GM12878 (cell line): ENCODE measurements at regions of chr5 and their contacts with region 1.

Region 1: GRCh38 chr5:39074016-39074886 is at the start of gene RICTOR:
- DNase-seq: peak; percentile 66
- ATAC-seq: peak; percentile 84
- H3K4me3 ChIP-seq: peak within 1 kb of the TSS; percentile 74
- H3K27ac ChIP-seq: peak within 1 kb of the TSS; percentile 97
- H3K4me1 ChIP-seq: peaks cover 4% of the 10 kb centered on the region; the same call in 1 of the 2 replicates
- H3K27me3 ChIP-seq: no peaks in the 10 kb centered on the region
- CTCF ChIP-seq: no peak
- EP300 ChIP-seq: no peak
- POLR2A ChIP-seq: peak; percentile 90
- RAD21 ChIP-seq: no peak
- polyA plus RNA-seq, gene RICTOR: 2.7 to 5.4 TPM

Region 2: DNA sequence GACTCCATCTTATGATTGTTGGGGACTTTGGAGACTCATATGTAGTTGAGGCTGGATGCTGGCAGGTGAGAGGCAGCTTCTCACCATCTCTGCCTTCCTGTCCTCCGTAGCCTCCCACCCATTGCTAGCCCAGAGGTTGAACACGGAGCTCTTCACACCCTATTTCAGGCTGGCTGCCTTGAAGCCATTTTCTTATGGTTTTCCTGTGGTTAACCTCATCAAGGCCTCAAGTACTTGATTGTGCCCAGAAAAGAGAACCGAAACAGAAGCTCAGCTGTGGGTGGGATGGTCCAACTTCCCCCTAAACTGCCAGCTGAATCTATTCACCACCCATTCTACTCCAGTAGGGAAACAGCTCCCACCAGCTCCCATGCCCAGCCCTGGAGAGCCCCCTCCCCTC is 620.7 kb before region 1 on chr5:
- CTCF ChIA-PET with region 1: no interaction called
- POLR2A ChIA-PET with region 1: no interaction called
- RAD21 ChIA-PET with region 1: no interaction called
- SMC1A ChIA-PET with region 1: no interaction called
- in situ Hi-C with region 1: loop called (anchors 25 kb)
- intact Hi-C with region 1: loop called (anchors 10 kb)
- DNase-seq: peak; percentile 89
- ATAC-seq: peak; percentile 98
- H3K4me3 ChIP-seq: no peak overlapping the region
- H3K27ac ChIP-seq: no peak overlapping the region
- H3K4me1 ChIP-seq: peaks cover 16% of the 10 kb centered on the region
- H3K27me3 ChIP-seq: peaks cover 0 to 21% of the 10 kb centered on the region in 2 experiments
- CTCF ChIP-seq: no peak
- EP300 ChIP-seq: peak; percentile 87 to 88
- POLR2A ChIP-seq: no peak
- RAD21 ChIP-seq: no peak

Region 3: GRCh38 chr5:39005566-39006232 is 68.6 kb before region 1 on chr5:
- CTCF ChIA-PET with region 1: interaction called, 110 read pairs
- POLR2A ChIA-PET with region 1: interaction called, 6 read pairs
- RAD21 ChIA-PET with region 1: interaction called, 32 read pairs
- SMC1A ChIA-PET with region 1: interaction called, 68 read pairs
- in situ Hi-C with region 1: no loop called
- intact Hi-C with region 1: no loop called
- DNase-seq: no peak
- ATAC-seq: peak; percentile 76
- H3K4me3 ChIP-seq: no peak overlapping the region
- H3K27ac ChIP-seq: no peak overlapping the region
- H3K4me1 ChIP-seq: no peaks in the 10 kb centered on the region
- H3K27me3 ChIP-seq: no peaks in the 10 kb centered on the region
- CTCF ChIP-seq: peak; percentile 34 to 45 (median 40); a peak in 3 of 6 replicates
- EP300 ChIP-seq: no peak
- POLR2A ChIP-seq: no peak
- RAD21 ChIP-seq: peak; percentile 40; the same call in 1 of the 2 replicates

Region 4: GRCh38 chr5:39063037-39063436 is 11.2 kb before region 1 on chr5:
- CTCF ChIA-PET with region 1: interaction called, 18 read pairs
- POLR2A ChIA-PET with region 1: interaction called, 3 read pairs
- RAD21 ChIA-PET with region 1: no interaction called
- SMC1A ChIA-PET with region 1: interaction called, 22 read pairs
- in situ Hi-C with region 1: no loop called
- intact Hi-C with region 1: no loop called
- DNase-seq: no peak
- ATAC-seq: peak; percentile 31; the same call in 2 of the 3 replicates
- H3K4me3 ChIP-seq: no peak overlapping the region
- H3K27ac ChIP-seq: no peak overlapping the region
- H3K4me1 ChIP-seq: peaks cover 8% of the 10 kb centered on the region; the same call in 1 of the 2 replicates
- H3K27me3 ChIP-seq: no peaks in the 10 kb centered on the region
- CTCF ChIP-seq: no peak
- EP300 ChIP-seq: no peak
- POLR2A ChIP-seq: no peak
- RAD21 ChIP-seq: no peak

Region 5: DNA sequence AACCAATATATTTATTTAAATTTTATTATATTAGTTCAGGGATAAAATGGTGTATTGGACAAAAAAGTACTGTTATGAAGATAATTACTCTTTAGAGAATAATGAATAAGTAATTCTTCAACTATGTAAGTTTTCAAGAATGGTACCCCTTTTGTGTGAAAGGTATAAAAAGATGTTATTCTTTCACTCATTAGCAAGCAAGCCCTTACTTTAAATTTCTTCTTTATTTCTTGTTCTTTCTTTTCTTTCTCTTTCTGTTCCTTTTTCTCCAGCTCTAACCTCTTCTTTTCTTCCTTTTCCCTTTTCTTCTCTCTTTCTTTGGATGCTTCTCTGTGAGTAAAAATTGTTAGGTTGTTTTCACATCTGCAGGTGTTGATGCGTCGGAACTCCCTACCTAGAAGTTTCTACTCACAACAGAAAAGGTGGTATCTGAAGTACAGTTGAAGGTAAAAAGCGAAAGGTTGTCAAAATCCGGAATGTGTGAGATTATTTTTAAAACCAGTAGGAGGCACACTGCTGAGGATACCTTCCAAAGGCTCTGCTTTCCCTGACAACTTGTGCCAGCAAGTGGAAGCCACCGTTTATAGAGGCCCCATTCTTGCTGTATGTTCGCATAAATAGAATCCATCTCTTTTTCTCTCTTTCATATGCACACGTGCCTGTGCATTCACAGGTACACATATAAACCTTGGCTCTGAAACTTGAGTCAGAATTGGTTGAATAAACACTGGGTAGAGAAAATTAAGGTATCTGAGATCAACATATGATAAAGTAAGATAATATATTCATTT is 63.3 kb after region 1 on chr5:
- CTCF ChIA-PET with region 1: no interaction called
- POLR2A ChIA-PET with region 1: no interaction called
- RAD21 ChIA-PET with region 1: no interaction called
- SMC1A ChIA-PET with region 1: no interaction called
- in situ Hi-C with region 1: no loop called
- intact Hi-C with region 1: no loop called
- DNase-seq: no peak
- ATAC-seq: no peak
- H3K4me3 ChIP-seq: no peak overlapping the region
- H3K27ac ChIP-seq: no peak overlapping the region
- H3K4me1 ChIP-seq: no peaks in the 10 kb centered on the region
- H3K27me3 ChIP-seq: no peaks in the 10 kb centered on the region
- CTCF ChIP-seq: no peak
- EP300 ChIP-seq: no peak
- POLR2A ChIP-seq: no peak
- RAD21 ChIP-seq: no peak

Region 6: GRCh38 chr5:40834849-40835787 is 1760.9 kb after region 1 on chr5 and contains the start of gene RPL37:
- CTCF ChIA-PET with region 1: no interaction called
- POLR2A ChIA-PET with region 1: no interaction called
- RAD21 ChIA-PET with region 1: no interaction called
- SMC1A ChIA-PET with region 1: no interaction called
- in situ Hi-C with region 1: loop called (anchors 10 kb)
- intact Hi-C with region 1: no loop called
- DNase-seq: peak; percentile 87
- ATAC-seq: peak; percentile 92
- H3K4me3 ChIP-seq: peak within 1 kb of the TSS; percentile 92
- H3K27ac ChIP-seq: peak within 1 kb of the TSS; percentile 97
- H3K4me1 ChIP-seq: peaks cover 11% of the 10 kb centered on the region
- H3K27me3 ChIP-seq: no peaks in the 10 kb centered on the region
- CTCF ChIP-seq: no peak
- EP300 ChIP-seq: no peak
- POLR2A ChIP-seq: peak; percentile 99
- RAD21 ChIP-seq: no peak
- polyA plus RNA-seq, gene RPL37: 2,699 to 2,779 TPM